OCI-LY7 (cell line): ENCODE measurements at regions of chr3 and their contacts with region 1.

Region 1: GRCh38 chr3:126245811-126246727 is 65.7 kb upstream of the ALDH1L1 start:
- DNase-seq: peak; percentile 66
- H3K4me3 ChIP-seq: no peak overlapping the region
- H3K27ac ChIP-seq: no peak overlapping the region
- H3K4me1 ChIP-seq: no peaks in the 10 kb centered on the region
- CTCF ChIP-seq: peak; percentile 87

Region 2: DNA sequence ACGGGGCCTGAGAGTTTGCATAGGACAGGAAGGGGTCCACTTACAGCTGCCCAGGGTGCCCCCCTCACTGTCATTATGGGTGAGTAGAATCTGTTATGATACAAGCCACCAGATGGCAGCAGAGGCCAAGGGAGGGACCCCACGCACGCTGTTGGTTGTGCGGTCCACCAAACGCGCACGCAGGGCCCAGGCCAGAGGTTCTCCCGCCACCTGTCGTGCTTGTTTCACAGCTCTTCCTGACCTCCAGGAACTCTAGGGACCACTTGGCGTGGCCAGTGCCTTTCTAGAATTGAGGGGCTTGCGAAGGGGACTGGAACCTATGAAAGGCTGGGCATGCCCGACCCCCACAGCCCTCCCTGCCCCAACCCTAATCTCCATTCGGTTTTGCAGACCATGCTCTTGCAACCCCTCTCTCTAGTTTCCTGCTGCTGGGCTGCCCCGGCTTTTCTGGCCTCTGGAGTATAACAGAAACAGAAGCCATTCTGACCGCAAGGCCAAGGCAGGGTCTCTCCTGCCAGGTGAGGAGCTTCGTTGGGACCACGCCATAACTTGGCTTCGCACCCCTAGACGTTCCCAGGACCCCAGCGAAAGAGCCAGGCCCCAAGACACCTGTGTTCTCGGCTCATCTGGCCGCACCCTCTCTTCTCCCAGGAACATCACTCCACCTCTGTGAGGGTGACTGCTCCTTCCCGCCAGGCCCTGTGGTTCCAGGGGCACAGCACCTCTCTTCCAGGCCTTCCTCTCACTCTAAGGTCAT is 111.7 kb before region 1 on chr3:
- CTCF ChIA-PET with region 1: no interaction called
- POLR2A ChIA-PET with region 1: no interaction called
- intact Hi-C with region 1: loop called (anchors 1 kb)
- DNase-seq: peak; percentile 54
- H3K4me3 ChIP-seq: no peak overlapping the region
- H3K27ac ChIP-seq: no peak overlapping the region
- H3K4me1 ChIP-seq: no peaks in the 10 kb centered on the region
- CTCF ChIP-seq: peak; percentile 80

Region 3: GRCh38 chr3:126389112-126389793 is 143.2 kb after region 1 on chr3:
- CTCF ChIA-PET with region 1: interaction called, 17 read pairs
- POLR2A ChIA-PET with region 1: interaction called, 3 read pairs
- intact Hi-C with region 1: loop called (anchors 1 kb)
- DNase-seq: peak; percentile 81
- H3K4me3 ChIP-seq: peak overlapping the region; percentile 48
- H3K27ac ChIP-seq: no peak overlapping the region
- H3K4me1 ChIP-seq: peaks cover 14% of the 10 kb centered on the region
- CTCF ChIP-seq: peak; percentile 89

Region 4: GRCh38 chr3:126475413-126476114 is 229.5 kb after region 1 on chr3 and contains the start of gene ZXDC:
- CTCF ChIA-PET with region 1: no interaction called
- POLR2A ChIA-PET with region 1: no interaction called
- intact Hi-C with region 1: loop called (anchors 1 kb)
- DNase-seq: peak; percentile 94
- H3K4me3 ChIP-seq: peak within 1 kb of the TSS; percentile 76
- H3K27ac ChIP-seq: peak within 1 kb of the TSS; percentile 34
- H3K4me1 ChIP-seq: peaks cover 35% of the 10 kb centered on the region
- CTCF ChIP-seq: peak; percentile 45; the same call in 1 of the 2 replicates
- total RNA-seq, gene ZXDC: 26.6 and 34.9 TPM in 2 replicates